AG04450 (cell line): ENCODE measurements at regions of chr2 and their contacts with region 1.

Region 1: GRCh38 chr2:27370026-27370815 is at the starts of genes EIF2B4 and SNX17:
- DNase-seq: peak; percentile 98
- H3K4me3 ChIP-seq: peak within 1 kb of the TSS; percentile 96
- H3K27ac ChIP-seq: peak within 1 kb of the TSS; percentile 84
- H3K27me3 ChIP-seq: no peaks in the 10 kb centered on the region
- CTCF ChIP-seq: peak; percentile 77
- polyA plus RNA-seq, gene EIF2B4: 43.0 and 52.2 TPM in 2 replicates
- polyA plus RNA-seq, gene SNX17: 123 and 137 TPM in 2 replicates

Region 2: DNA sequence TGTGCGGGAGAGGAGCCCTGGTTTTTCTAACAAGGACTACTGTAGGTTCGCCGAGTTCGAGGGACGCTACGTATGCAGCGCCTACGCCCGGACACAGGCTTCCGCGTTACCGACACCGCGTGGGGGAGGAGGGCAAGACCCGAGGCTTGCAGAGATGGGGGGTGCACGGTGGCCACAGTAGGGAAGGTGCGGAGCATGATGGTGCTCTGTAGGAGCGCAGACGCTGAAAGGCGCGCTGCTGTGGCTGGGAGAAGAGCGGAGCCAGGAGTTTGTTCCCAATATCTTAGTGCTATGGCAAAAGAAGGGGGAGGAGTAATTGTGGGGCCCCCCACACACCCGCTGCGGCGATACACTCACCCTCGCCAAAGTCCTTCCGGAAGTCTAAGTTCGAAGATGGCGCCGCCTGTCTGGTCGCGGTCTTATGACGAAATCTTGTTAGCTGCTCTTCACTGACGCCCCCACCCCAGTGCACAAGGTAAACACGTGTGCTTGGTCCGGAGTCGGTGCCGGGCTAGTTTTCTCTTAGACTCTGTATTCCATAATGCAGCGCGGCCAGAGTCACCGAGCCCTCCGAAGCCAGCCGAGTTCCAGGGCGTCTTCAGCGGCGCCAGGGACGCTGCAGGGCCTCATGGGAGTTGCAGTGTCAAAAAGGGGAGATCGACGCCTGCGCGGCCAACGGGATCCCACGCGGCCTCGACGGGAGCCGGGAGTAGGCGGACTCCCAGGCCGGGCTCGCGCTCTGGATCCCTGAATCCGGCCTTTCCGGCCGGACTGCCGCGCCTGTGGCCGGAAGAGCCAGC is 13.6 kb before region 1 on chr2 and contains the start of gene GTF3C2:
- CTCF ChIA-PET with region 1: interaction called, 3 read pairs
- POLR2A ChIA-PET with region 1: interaction called, 35 read pairs
- DNase-seq: peak; percentile 90
- H3K4me3 ChIP-seq: peak within 1 kb of the TSS; percentile 98
- H3K27ac ChIP-seq: peak within 1 kb of the TSS; percentile 96
- H3K27me3 ChIP-seq: no peaks in the 10 kb centered on the region
- CTCF ChIP-seq: no peak
- polyA plus RNA-seq, gene GTF3C2: 39.0 TPM in 2 replicates

Region 3: DNA sequence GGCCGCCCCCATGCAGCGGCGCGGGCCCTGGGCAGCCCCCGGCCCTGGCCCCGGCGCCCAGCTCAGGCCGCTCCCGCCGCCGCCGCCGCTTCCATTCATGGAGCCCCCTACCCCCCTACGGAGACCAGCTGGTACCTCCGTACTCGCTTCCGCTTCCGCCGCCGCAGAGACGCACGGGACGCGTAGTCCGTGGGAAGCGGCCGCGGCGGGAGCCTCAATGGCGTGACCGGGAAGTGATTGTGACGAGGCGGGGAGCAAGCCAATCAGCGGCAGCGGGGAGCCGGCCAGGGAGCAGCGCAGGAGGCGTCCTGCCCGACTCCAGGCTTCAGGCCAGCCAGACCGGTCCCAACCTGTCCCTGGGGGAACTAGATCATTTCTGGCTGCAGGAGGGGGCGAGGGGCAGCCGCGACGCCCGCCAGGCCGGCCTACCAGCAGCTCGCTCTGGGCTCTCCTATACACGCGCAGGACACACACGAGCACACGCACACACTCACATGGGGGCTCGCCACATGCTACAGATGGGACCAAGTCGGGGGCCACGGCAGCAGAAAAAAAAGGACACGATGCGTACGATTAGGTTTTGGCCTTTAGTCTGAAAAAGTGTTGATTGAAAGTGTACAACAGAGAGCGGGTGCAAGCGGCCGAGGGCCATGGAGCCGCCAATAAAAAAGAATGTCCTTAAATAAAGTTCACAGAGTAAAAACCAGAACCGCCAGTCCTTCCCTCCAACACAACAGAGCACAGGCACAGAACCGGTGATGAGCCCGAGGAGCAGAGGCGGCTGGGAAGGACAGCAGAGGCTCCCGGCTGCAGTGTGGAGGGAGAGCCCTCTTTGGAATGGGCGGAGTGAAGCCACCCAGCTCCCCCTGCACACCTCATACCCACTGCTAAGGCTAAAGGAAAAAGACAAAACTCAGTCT is 10.7 kb after region 1 on chr2 and contains the start of gene ZNF513:
- CTCF ChIA-PET with region 1: interaction called, 10 read pairs
- POLR2A ChIA-PET with region 1: interaction called, 34 read pairs
- DNase-seq: peak; percentile 84
- H3K4me3 ChIP-seq: peak within 1 kb of the TSS; percentile 88
- H3K27ac ChIP-seq: peak within 1 kb of the TSS; percentile 95
- H3K27me3 ChIP-seq: no peaks in the 10 kb centered on the region
- CTCF ChIP-seq: no peak
- polyA plus RNA-seq, gene ZNF513: 7.4 and 11.1 TPM in 2 replicates

Region 4: GRCh38 chr2:27537287-27537686 is 167.1 kb after region 1 on chr2:
- CTCF ChIA-PET with region 1: no interaction called
- POLR2A ChIA-PET with region 1: no interaction called
- DNase-seq: no peak
- H3K4me3 ChIP-seq: no peak overlapping the region
- H3K27ac ChIP-seq: no peak overlapping the region
- H3K27me3 ChIP-seq: peaks cover 9% of the 10 kb centered on the region
- CTCF ChIP-seq: no peak